Activated CD4-positive, alpha-beta memory T cell treated with anti-CD3 and anti-CD28 coated beads, Interleukin-2, amount 10 ng/mL, durations not matched to agents 7 days and 5 days (primary cell): ENCODE measurements at regions of chr1 and their contacts with region 1.

Region 1: DNA sequence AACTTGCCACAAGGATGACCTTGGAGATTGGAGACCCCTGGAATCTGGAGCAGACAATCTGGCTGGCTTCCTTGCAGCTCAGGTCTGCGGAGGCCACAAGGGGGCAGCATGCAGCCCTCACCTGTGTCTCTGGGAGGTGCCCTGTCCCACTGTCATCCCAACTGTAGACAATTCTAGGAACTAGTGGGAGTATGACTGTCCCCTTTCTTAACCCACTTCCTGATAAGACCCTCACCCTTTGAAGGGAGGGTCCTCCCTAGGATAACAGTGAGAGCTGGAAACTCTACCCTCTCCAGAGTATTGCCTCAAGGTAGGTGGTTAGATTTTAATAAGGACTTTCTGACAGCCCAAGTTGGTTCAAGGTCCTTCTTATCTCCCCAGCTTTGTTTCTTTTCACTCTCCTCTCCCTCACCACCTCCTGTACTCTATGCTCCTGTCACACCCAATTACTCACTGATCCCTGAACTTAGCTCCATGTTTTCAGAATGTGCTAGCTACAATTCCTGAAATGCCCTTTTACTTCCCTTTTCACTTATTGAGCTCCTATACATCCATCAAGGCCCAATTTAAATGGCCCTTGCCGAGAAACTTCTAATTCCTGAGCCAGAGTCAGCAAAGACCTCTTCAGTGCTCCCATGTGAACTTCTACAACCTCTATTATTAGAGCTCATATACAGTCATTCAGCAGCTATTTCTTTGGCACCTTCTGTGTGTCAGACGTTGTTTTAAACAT is 9.2 kb upstream of the KCNQ4 start:
- DNase-seq: peak; percentile 63
- H3K4me3 Mint-ChIP-seq: no peak overlapping the region
- H3K27ac Mint-ChIP-seq: peak overlapping the region; percentile 2
- H3K4me1 Mint-ChIP-seq: peaks cover 16% of the 10 kb centered on the region
- H3K27me3 Mint-ChIP-seq: no peaks in the 10 kb centered on the region

Region 2: GRCh38 chr1:40352126-40352525 is 422.3 kb before region 1 on chr1:
- CTCF ChIA-PET with region 1: no interaction called
- POLR2A ChIA-PET with region 1: no interaction called
- DNase-seq: no peak
- H3K4me3 Mint-ChIP-seq: no peak overlapping the region
- H3K27ac Mint-ChIP-seq: no peak overlapping the region
- H3K4me1 Mint-ChIP-seq: no peaks in the 10 kb centered on the region
- H3K27me3 Mint-ChIP-seq: no peaks in the 10 kb centered on the region

Region 3: DNA sequence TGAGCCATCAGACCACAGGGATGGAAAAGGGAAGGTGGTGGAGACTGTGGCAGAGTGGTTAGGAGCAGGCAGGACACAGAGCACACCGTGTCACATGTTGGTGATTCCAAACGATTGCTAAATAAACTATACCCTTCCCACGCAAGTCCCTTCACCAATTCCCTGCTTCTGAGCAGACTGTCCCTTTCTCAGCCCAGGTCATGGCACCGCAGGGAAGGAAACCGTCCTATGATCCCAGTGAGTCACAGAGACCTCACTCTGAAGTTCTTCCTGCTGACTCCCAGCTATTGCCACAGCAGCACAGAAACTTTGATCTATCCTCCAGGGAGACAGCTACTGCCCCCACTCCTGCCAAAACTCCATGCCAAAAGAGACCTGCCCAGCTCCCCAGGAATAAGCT is 128.1 kb before region 1 on chr1:
- CTCF ChIA-PET with region 1: no interaction called
- POLR2A ChIA-PET with region 1: no interaction called
- DNase-seq: no peak
- H3K4me3 Mint-ChIP-seq: no peak overlapping the region
- H3K27ac Mint-ChIP-seq: no peak overlapping the region
- H3K4me1 Mint-ChIP-seq: no peaks in the 10 kb centered on the region
- H3K27me3 Mint-ChIP-seq: no peaks in the 10 kb centered on the region

Region 4: GRCh38 chr1:40662864-40663263 is 111.6 kb before region 1 on chr1:
- CTCF ChIA-PET with region 1: no interaction called
- POLR2A ChIA-PET with region 1: no interaction called
- DNase-seq: peak; percentile 43
- H3K4me3 Mint-ChIP-seq: no peak overlapping the region
- H3K27ac Mint-ChIP-seq: peak overlapping the region; percentile 0
- H3K4me1 Mint-ChIP-seq: peaks cover 29% of the 10 kb centered on the region
- H3K27me3 Mint-ChIP-seq: peaks cover 2% of the 10 kb centered on the region

Region 5: DNA sequence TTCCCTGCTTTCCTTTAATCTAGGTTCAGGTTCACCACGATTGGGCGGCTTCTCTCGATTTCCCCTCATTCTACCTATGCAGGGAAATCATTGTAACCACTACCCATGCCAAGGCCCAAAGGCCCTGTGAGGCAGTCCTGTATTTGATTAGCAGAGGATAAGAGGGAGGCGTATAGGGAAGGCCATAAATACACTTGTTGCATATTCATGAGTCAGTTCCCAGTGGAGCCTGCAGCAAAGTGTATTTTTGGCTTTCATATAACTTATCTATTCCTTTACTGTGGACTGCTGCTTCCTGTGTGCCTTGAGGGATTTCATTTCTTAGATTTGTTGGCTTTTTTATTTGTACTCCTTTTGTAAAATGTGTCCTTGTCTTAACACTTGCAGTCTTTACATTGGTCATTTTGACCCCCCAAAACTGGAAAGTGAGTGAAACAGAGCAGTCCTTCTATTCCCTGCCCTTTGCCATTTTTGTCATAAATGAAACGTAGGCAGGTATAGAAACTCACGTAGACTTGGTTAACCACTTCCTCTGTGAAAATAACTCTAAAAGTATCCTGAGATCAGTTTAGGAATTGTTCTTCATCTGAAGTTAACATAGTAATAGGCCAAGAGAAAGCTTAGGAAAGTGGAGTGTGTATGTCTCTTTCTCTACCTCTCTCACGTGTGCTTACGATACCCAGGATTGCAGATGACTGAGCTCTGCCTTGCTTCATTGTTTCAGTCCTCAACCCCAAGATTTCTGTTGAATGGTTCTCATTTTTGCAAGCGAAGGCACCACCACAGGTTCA is 10.5 kb before region 1 on chr1:
- CTCF ChIA-PET with region 1: interaction called, 68 read pairs
- POLR2A ChIA-PET with region 1: interaction called, 6 read pairs
- DNase-seq: no peak
- H3K4me3 Mint-ChIP-seq: peak overlapping the region; percentile 36
- H3K27ac Mint-ChIP-seq: peak overlapping the region; percentile 85
- H3K4me1 Mint-ChIP-seq: peaks cover 32% of the 10 kb centered on the region
- H3K27me3 Mint-ChIP-seq: no peaks in the 10 kb centered on the region

Region 6: DNA sequence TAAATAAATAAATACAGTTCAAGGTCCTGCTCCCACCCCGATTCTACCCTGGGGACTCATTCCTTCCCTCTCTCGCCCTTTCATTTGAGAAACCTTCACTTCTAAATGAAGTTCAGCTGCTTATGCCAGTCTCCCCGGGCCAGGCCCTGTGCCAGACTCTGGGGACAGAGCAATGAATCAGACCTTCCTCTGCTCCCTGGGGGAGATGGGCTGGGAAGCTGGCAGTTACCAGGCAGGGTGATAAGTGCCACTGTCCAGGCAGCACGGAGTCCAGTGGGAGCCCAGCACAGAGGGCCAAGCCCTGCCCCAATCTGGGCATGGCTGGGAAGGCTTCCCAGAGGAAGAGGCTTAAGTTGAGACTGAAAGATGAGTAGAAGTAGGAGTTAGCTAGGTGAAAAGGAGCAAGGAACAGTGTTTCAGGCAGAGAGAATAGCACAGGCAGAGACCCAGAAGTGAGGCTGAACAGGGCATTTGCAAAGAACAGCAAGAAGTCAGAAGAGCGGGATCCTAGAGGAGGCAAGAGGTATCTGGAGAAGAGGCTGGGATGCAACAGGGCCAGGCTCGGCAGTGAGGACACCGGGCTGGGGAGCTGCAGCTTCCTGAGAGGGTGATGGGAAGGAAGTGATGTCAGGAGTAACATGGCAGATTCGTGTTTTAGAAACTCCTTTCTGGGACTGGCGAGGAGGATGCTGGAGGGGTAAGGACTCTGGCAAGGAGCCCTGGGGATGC is 22.7 kb after region 1 on chr1:
- CTCF ChIA-PET with region 1: interaction called, 23 read pairs
- POLR2A ChIA-PET with region 1: interaction called, 4 read pairs
- DNase-seq: no peak
- H3K4me3 Mint-ChIP-seq: no peak overlapping the region
- H3K27ac Mint-ChIP-seq: no peak overlapping the region
- H3K4me1 Mint-ChIP-seq: peaks cover 36% of the 10 kb centered on the region
- H3K27me3 Mint-ChIP-seq: peaks cover 4% of the 10 kb centered on the region

Region 7: GRCh38 chr1:40831001-40831732 is 56.7 kb after region 1 on chr1:
- CTCF ChIA-PET with region 1: interaction called, 10 read pairs
- POLR2A ChIA-PET with region 1: no interaction called
- DNase-seq: no peak
- H3K4me3 Mint-ChIP-seq: no peak overlapping the region
- H3K27ac Mint-ChIP-seq: no peak overlapping the region
- H3K4me1 Mint-ChIP-seq: peaks cover 4% of the 10 kb centered on the region
- H3K27me3 Mint-ChIP-seq: no peaks in the 10 kb centered on the region

Region 8: GRCh38 chr1:40849801-40850592 is 75.6 kb after region 1 on chr1:
- CTCF ChIA-PET with region 1: interaction called, 104 read pairs
- POLR2A ChIA-PET with region 1: interaction called, 4 read pairs
- DNase-seq: peak; percentile 82
- H3K4me3 Mint-ChIP-seq: no peak overlapping the region
- H3K27ac Mint-ChIP-seq: no peak overlapping the region
- H3K4me1 Mint-ChIP-seq: peaks cover 14% of the 10 kb centered on the region
- H3K27me3 Mint-ChIP-seq: peaks cover 5% of the 10 kb centered on the region

Region 9: GRCh38 chr1:40855513-40855912 is 81.1 kb after region 1 on chr1:
- CTCF ChIA-PET with region 1: interaction called, 104 read pairs
- POLR2A ChIA-PET with region 1: interaction called, 3 read pairs
- DNase-seq: no peak
- H3K4me3 Mint-ChIP-seq: no peak overlapping the region
- H3K27ac Mint-ChIP-seq: no peak overlapping the region
- H3K4me1 Mint-ChIP-seq: peaks cover under 1% of the 10 kb centered on the region
- H3K27me3 Mint-ChIP-seq: peaks cover 33% of the 10 kb centered on the region